Mammary epithelial cell (primary cell): ENCODE measurements at regions of chr3 and their contacts with region 1.

Region 1: GRCh38 chr3:191328962-191329653 is at the start of gene CCDC50:
- DNase-seq: peak; percentile 73
- H3K4me3 ChIP-seq: peak within 1 kb of the TSS; percentile 65 to 83 (median 82)
- H3K27ac ChIP-seq: peak within 1 kb of the TSS; percentile 84
- H3K4me1 ChIP-seq: peaks cover 13% of the 10 kb centered on the region
- H3K27me3 ChIP-seq: no peaks in the 10 kb centered on the region
- CTCF ChIP-seq: peak in 1 of 2 donors; percentile 14
- total RNA-seq, gene CCDC50: 74.8 to 85.0 TPM

Region 2: GRCh38 chr3:191356611-191357439 is 27.7 kb after region 1 on chr3:
- CTCF ChIA-PET with region 1: no interaction called
- dilution Hi-C with region 1: no loop called
- in situ Hi-C with region 1: no loop called
- intact Hi-C with region 1: loop called (anchors 2 kb)
- DNase-seq: peak; percentile 84
- H3K4me3 ChIP-seq: peak overlapping the region in 1 of 3 experiments; percentile 37
- H3K27ac ChIP-seq: peak overlapping the region; percentile 91
- H3K4me1 ChIP-seq: peaks cover 59% of the 10 kb centered on the region
- H3K27me3 ChIP-seq: no peaks in the 10 kb centered on the region
- CTCF ChIP-seq: no peak

Region 3: DNA sequence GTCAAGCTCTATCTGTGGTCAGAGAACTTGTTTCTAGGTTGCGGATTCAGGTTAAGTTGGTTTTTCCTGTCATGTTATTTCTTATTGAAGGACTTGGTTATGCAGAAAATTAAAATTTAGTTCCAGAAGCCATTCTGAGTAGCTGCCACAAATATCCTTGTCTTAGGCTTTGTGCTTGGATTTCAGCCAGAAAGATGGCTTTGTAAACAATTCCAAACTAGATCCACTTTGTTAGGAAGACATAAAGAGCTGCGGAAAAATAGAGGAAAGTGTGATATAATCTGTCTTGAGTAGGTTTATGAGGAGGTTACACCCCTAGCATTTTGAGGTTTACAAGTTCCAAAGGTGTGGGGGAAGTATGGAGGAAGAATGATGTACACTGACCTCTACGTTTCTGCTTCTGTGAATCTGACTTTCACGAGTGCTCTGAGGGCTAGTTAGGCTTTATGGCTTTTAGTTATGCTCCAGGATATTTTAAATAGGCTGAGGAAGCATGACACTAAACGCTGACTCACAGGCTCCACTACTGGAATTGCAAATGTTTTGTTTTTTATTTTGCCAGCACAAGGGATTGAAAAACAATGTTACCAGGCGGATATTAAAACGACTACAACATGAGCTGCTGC is 47.5 kb after region 1 on chr3:
- CTCF ChIA-PET with region 1: no interaction called
- dilution Hi-C with region 1: no loop called
- in situ Hi-C with region 1: no loop called
- intact Hi-C with region 1: loop called (anchors 5 kb)
- DNase-seq: peak; percentile 75
- H3K4me3 ChIP-seq: no peak overlapping the region
- H3K27ac ChIP-seq: peak overlapping the region; percentile 59
- H3K4me1 ChIP-seq: peaks cover 33% of the 10 kb centered on the region
- H3K27me3 ChIP-seq: no peaks in the 10 kb centered on the region
- CTCF ChIP-seq: no peak